ENCODE measurements at regions of chr3 and their contacts with region 1.

Region 1: DNA sequence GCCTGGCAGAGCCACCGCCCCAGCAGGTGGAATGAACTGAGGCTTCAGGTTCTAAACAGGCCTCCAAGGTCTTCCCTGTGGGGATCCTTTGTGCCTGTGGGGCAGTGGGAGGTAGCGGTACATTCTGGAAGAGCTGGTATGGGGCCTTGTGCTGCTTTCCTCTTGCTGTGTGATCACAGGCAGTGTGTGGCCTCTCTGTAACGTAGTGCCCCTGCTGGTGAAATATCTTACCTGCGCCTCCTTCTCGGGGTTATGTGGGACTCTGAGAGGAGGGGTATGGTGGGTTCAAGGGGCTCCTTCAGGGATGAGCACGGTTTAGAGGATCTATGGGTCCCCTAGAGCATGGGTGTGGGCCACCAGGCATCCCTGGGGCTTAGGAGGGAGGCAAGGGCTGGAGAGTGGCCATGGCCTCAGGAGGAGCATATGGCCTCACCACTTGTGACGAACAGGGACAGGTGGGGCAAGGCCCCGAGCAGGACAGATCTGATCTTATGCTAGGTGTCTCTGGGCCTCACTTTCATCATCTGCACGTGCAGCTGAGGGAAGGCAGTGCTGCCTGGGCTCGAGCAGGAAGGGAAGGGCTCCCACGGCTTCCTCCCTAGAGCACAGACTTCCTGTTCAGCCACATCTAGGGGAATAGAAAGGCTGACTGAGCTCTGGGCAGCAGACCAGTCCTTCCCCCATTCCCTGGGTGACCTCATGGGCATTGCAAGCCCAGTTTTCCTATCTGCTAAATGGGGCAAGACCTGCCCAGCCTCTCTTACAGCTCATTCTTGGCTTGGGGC is 1.9 kb upstream of the ALS2CL start:
- DNase-seq: peak; percentile 89

Region 2: GRCh38 chr3:46566036-46566641 is 129.2 kb before region 1 on chr3 and contains the start of gene LRRC2:
- intact Hi-C with region 1: loop called (anchors 2 kb)
- DNase-seq: peak; percentile 84
- total RNA-seq, gene LRRC2: 70.6 TPM

Region 3: GRCh38 chr3:46666453-46666884 is 28.9 kb before region 1 on chr3:
- intact Hi-C with region 1: loop called (anchors 2 kb)
- DNase-seq: peak; percentile 79

Region 4: GRCh38 chr3:46860017-46860830 is 164.9 kb after region 1 on chr3:
- intact Hi-C with region 1: loop called (anchors 5 kb)
- DNase-seq: peak; percentile 75

Region 5: DNA sequence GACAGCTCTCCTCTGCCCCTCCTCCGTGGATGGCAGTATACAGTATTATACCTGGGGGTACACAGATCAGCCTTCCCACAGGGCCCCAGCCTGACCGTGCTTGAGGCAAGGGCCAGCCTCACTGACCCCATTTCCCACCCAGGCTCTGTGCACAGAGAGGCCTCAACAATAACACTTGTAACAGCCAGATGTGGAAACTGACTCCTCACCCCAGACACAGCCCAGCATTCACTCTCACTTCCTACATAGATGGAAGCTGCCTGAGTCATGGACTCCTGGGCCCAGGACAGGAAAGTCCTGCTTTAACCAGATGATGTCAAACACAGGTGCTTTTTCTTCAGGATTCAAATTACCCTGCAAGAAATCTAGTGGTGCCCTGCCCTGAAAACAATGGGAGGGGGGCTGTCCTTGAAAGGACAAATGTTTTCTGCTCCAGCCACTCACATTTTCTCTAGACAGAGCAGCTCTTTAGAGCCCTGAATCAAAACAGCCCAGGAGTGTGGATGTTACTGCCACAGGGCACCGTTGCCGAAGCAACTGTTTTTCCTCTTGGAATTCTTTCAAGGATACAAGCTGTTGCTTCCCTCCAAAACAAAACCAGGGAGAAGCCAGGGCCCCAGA is 264.8 kb after region 1 on chr3:
- intact Hi-C with region 1: no loop called
- DNase-seq: no peak

Measured in cardiac septum (tissue), 1 donor.